ENCODE measurements at regions of chr13 and their contacts with region 1.

Region 1: GRCh38 chr13:73000027-73000674 is 58.7 kb upstream of the KLF5 start:
- DNase-seq: no peak
- ATAC-seq: no peak
- H3K4me3 ChIP-seq: no peak overlapping the region
- H3K27ac ChIP-seq: no peak overlapping the region
- H3K4me1 ChIP-seq: no peaks in the 10 kb centered on the region
- H3K27me3 ChIP-seq: no peaks in the 10 kb centered on the region
- CTCF ChIP-seq: no peak

Region 2: DNA sequence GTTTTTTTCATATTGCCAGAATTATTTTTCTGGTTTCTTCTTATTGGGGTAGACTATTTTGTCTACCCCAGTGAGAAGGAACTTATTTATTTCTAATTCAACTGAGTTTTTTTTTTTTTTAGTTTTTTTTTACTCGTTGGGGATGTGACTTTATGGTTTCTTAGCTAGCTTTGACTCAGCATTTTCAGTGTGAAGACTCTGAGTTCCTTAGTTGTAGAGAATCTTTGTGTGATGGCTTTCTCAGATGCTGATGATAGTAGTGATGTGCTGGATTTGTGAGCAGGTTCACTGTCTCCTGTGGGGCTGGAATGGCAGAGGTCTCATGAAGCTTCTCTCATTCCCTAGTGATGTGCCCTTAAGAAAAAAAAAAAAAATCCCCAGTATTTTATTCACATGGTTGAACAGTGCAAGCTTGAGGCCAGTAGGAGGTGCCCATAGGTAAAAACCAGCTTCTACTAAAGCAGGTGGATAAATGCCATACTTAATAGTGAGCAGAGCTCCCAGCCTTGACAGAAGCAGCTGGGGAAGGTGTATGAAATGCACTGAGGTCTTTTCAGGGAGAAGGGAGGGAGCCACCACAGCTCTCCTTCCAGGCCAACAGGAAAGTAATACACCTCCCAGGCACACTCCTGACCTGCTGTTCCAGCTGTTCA is 47.5 kb before region 1 on chr13:
- CTCF ChIA-PET with region 1: no interaction called
- POLR2A ChIA-PET with region 1: interaction called, 12 read pairs
- in situ Hi-C with region 1: no loop called
- intact Hi-C with region 1: no loop called
- DNase-seq: no peak
- ATAC-seq: no peak
- H3K4me3 ChIP-seq: no peak overlapping the region
- H3K27ac ChIP-seq: no peak overlapping the region
- H3K4me1 ChIP-seq: no peaks in the 10 kb centered on the region
- H3K27me3 ChIP-seq: no peaks in the 10 kb centered on the region
- CTCF ChIP-seq: no peak